CD8-positive, alpha-beta memory T cell (primary cell): ENCODE measurements at regions of chr17 and their contacts with region 1.

Region 1: GRCh38 chr17:80426681-80427326 is 11.8 kb downstream of the ENDOV start:
- DNase-seq: peak; percentile 79 to 88 (median 82)
- H3K4me3 ChIP-seq: no peak overlapping the region
- H3K4me3 Mint-ChIP-seq: no peak overlapping the region
- H3K27ac ChIP-seq: no peak overlapping the region
- H3K27ac Mint-ChIP-seq: peak overlapping the region in 4 of 8 donors; percentile 4 to 82 (median 68)
- H3K4me1 ChIP-seq: peaks cover 9% of the 10 kb centered on the region
- H3K4me1 Mint-ChIP-seq: peaks cover 8 to 15% (median 9%) of the 10 kb centered on the region in 3 donors
- H3K27me3 ChIP-seq: no peaks in the 10 kb centered on the region
- H3K27me3 Mint-ChIP-seq: no peaks in the 10 kb centered on the region

Region 2: DNA sequence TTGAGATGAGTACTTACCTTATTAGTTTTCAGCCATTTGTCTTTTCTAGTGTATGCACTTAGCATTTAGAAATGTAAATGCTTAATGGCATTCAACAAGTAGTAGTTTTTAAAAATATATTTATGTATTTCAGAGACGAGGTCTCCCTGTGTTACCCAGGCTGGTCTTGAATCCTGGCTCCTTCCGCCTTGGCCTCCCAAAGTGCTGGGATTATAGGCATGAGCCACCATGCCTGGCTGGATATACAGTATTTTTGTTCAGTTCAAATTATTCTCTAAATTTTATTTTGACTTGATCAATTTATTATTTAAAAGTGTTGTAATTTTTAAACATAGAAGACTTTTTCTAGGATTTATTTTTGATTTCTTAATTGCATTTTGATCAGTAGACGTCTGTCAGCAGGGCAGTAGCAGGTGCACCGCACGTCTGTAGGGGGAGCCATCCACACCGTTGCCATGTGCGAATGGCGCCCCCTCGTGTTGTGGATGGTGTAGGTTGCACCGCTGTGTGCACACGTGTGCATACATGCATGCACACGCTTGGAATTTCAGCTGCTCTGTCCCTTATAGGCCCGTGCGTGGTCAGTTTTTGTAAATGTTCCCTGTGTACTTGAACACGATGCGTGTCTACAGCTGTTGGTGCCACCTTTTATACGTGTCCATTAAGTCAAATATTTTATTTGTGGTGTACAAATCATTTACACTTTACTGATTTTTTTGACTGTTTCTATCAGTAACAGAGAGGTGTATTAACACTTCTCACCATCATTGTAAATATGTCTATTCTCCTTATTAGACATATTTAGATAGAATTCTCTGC is 148.5 kb after region 1 on chr17:
- CTCF ChIA-PET with region 1: interaction called, 16 read pairs
- POLR2A ChIA-PET with region 1: interaction called, 5 read pairs
- DNase-seq: peak; percentile 75 to 90 (median 82)
- H3K4me3 ChIP-seq: no peak overlapping the region
- H3K4me3 Mint-ChIP-seq: no peak overlapping the region
- H3K27ac ChIP-seq: no peak overlapping the region
- H3K27ac Mint-ChIP-seq: peak overlapping the region in 3 of 8 donors; percentile 8 to 29 (median 20)
- H3K4me1 ChIP-seq: no peaks in the 10 kb centered on the region
- H3K4me1 Mint-ChIP-seq: peaks cover 17 to 27% (median 21%) of the 10 kb centered on the region in 3 donors
- H3K27me3 ChIP-seq: no peaks in the 10 kb centered on the region
- H3K27me3 Mint-ChIP-seq: no peaks in the 10 kb centered on the region

Region 3: GRCh38 chr17:80649678-80650672 is 223.2 kb after region 1 on chr17:
- CTCF ChIA-PET with region 1: no interaction called
- POLR2A ChIA-PET with region 1: no interaction called
- DNase-seq: peak in 2 of 5 donors; percentile 49 to 58
- H3K4me3 ChIP-seq: no peak overlapping the region
- H3K4me3 Mint-ChIP-seq: peak overlapping the region in 5 of 7 donors; percentile 46 to 76 (median 59)
- H3K27ac ChIP-seq: no peak overlapping the region
- H3K27ac Mint-ChIP-seq: peak overlapping the region; percentile 14 to 90 (median 34)
- H3K4me1 ChIP-seq: peaks cover 67% of the 10 kb centered on the region
- H3K4me1 Mint-ChIP-seq: peaks cover 51 to 69% (median 63%) of the 10 kb centered on the region in 3 donors
- H3K27me3 ChIP-seq: no peaks in the 10 kb centered on the region
- H3K27me3 Mint-ChIP-seq: peaks cover 0 to 1% of the 10 kb centered on the region in 2 donors

Region 4: DNA sequence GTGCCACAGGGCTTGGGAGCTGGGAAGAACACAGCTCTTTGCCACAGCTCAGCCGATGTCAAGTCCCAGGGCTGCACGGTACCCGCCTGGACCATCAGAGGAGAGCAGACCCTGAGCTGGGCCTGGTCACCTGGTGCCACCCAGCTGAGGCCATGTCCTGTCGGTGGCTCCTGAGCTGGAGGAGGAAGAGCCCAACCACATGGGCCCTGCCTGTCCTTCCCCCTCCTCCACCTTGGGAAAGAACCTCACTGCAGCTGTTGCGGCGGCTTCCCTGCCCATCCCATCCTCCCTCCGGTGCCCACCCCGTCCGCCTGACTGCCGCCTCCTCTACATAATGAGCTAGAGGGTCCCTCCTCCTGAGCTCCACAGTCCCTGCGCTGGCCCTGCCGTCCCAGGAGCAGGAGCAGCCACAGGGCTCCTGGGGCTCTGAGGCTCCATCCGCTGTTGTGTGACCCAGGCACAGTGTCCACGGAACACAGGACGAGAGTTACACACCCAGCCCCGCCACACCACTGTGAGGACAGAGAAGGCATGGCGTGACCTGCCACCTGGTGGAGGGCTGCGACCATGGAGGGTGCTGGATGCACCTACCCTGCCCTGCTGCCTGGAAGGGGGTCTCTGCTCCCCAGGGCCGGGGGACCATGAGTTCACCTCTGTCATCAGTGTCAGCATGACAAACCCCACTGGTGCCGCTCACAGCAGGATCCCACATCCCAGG is 543.4 kb after region 1 on chr17:
- CTCF ChIA-PET with region 1: interaction called, 15 read pairs
- POLR2A ChIA-PET with region 1: no interaction called
- DNase-seq: peak in 4 of 5 donors; percentile 16 to 61 (median 32)
- H3K4me3 ChIP-seq: no peak overlapping the region
- H3K4me3 Mint-ChIP-seq: peak overlapping the region in 1 of 7 donors; percentile 34
- H3K27ac ChIP-seq: no peak overlapping the region
- H3K27ac Mint-ChIP-seq: peak overlapping the region in 1 of 8 donors; percentile 43
- H3K4me1 ChIP-seq: peaks cover 12% of the 10 kb centered on the region
- H3K4me1 Mint-ChIP-seq: peaks cover 0 to 6% (median 4%) of the 10 kb centered on the region in 3 donors
- H3K27me3 ChIP-seq: no peaks in the 10 kb centered on the region
- H3K27me3 Mint-ChIP-seq: peaks cover 5 to 10% of the 10 kb centered on the region in 2 donors

Region 5: GRCh38 chr17:80980397-80981061 is 553.7 kb after region 1 on chr17:
- CTCF ChIA-PET with region 1: interaction called, 12 read pairs
- POLR2A ChIA-PET with region 1: no interaction called
- DNase-seq: no peak
- H3K4me3 ChIP-seq: no peak overlapping the region
- H3K4me3 Mint-ChIP-seq: peak overlapping the region in 5 of 7 donors; percentile 21 to 68 (median 44)
- H3K27ac ChIP-seq: no peak overlapping the region
- H3K27ac Mint-ChIP-seq: peak overlapping the region in 3 of 8 donors; percentile 19 to 74 (median 68)
- H3K4me1 ChIP-seq: no peaks in the 10 kb centered on the region
- H3K4me1 Mint-ChIP-seq: peaks cover 4 to 12% (median 9%) of the 10 kb centered on the region in 3 donors
- H3K27me3 ChIP-seq: peaks cover 4% of the 10 kb centered on the region
- H3K27me3 Mint-ChIP-seq: peaks cover 20 to 30% of the 10 kb centered on the region in 2 donors